ENCODE measurements at regions of chr10 and their contacts with region 1.

Region 1: DNA sequence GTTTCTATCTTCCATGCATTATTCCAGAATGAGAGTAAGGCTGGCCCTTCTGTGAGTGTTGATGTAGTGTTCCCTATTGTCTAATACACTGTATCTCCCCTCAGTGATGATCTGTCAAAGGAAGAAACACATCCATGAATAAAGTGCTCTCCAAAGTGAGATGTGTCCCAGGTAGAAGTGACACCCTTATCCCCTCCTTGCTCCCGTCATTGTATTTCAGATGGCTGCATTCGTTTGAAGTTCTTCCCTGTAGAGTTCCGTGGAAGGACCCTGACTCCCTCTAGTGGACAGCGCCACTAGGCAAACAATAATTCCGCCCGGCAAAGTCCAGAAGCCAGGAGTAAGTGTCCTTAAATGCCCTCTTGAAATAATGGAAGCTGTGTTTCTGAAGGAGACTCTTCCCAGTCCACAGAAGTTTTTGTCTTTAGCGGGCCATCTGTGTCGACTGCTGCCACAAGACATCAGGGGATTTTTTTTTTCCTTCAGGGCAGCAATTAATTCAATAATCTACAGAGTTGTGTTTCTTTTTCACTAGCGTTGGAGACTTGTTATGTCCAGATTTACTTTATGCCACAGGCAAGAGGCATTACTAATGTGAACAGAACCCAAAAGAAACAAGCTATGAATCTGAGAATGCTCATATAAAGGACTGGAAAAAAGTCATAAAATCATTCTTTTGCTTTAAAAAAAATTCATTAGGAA is 64.6 kb downstream of the THNSL1 start:
- DNase-seq: peak; percentile 45
- H3K4me3 Mint-ChIP-seq: no peak overlapping the region
- H3K27ac Mint-ChIP-seq: no peak overlapping the region
- H3K4me1 Mint-ChIP-seq: peaks cover 15% of the 10 kb centered on the region
- H3K27me3 Mint-ChIP-seq: peaks cover 20% of the 10 kb centered on the region

Region 2: DNA sequence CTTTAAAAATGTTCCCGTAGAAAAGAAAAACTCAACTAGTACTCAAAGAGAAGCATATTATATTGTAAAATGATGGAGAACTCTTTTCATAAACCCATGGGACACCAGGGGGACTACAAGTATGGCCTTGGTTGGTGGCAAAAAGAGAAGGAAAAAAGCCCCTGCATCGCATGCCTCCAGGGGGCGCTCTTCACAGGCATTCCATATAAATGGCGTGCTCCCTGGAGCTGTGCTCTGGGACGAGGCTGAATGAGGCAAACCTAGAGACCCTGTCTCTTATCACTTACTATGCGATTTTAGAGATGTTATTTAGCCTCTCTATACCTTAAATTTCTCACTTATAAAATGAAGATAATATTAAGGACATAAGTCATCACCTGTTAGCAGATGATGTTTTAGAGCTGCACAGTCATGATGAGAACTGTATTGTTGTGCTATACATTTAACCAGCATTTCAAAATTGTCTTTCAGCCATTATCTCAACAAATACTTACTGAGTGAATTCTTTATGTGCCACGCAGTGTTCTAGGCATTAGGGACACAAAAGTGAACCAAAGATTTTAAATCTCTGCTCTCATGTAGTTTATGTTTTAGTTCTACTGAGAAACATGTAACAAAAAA is 463.1 kb before region 1 on chr10:
- intact Hi-C with region 1: loop called (anchors 1 kb)
- DNase-seq: no peak
- H3K4me3 Mint-ChIP-seq: no peak overlapping the region
- H3K27ac Mint-ChIP-seq: peak overlapping the region; percentile 74
- H3K4me1 Mint-ChIP-seq: peaks cover 29% of the 10 kb centered on the region
- H3K27me3 Mint-ChIP-seq: no peaks in the 10 kb centered on the region

Region 3: DNA sequence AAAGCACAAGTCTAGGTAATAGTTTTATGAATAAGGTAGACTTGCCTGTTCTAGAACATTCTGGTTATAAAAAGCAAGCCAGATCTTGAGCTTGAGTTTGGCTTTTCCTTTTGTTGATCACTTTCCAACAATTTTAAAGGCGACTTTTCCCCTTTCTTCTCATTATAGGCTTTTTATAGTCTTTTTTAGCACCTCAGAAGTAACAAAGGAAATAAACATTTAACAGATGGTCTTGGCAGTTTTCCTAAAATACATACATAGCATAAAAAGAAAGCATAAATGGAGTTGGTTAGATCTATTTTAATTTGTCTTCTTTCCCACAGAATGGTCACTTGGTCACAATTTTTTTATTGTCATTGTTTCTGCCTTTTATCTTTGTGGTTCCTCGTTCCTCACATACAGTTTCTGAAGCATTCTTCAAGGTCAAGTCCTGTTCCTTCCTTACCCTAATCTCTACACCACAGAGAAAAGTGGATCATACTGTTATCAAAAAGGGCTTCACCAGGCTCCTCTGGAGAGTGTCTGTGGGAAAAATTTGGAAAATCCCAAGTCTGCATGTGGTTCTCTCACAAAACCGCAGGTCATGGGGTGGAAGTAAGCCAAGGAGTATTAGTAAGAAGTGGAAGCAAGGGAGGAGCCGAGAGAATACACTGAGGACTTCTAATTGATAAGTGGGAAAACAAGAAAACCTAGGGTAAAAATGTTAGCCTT is 33.3 kb before region 1 on chr10:
- intact Hi-C with region 1: no loop called
- DNase-seq: no peak
- H3K4me3 Mint-ChIP-seq: no peak overlapping the region
- H3K27ac Mint-ChIP-seq: no peak overlapping the region
- H3K4me1 Mint-ChIP-seq: no peaks in the 10 kb centered on the region
- H3K27me3 Mint-ChIP-seq: peaks cover 35% of the 10 kb centered on the region

Region 4: DNA sequence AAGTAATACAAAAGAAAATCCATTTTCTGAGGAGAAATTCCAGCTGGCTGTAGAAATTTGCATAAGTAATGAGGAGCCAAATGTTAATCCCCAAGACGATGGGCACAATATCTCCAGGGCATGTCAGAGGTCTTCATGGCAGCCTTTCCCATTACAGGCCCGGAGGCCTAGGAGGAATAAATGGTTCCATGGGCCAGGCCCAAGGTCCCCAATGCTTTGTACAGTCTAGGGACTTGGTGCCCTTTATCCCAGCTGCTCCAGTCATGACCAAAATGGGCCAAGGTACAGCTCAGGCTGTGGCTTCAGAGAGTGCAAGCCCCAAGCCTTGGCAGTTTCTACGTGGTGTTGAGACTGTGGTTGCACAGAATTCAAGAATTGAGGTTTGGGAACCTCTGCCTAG is 276.2 kb after region 1 on chr10:
- intact Hi-C with region 1: no loop called
- DNase-seq: no peak
- H3K4me3 Mint-ChIP-seq: no peak overlapping the region
- H3K27ac Mint-ChIP-seq: no peak overlapping the region
- H3K4me1 Mint-ChIP-seq: no peaks in the 10 kb centered on the region
- H3K27me3 Mint-ChIP-seq: no peaks in the 10 kb centered on the region